Activated CD4-positive, alpha-beta memory T cell treated with anti-CD3 and anti-CD28 coated beads, Interleukin-2, amount 10 ng/mL, durations not matched to agents 7 days and 5 days (primary cell): ENCODE measurements at regions of chr3 and their contacts with region 1.

Region 1: GRCh38 chr3:88019024-88019423 is 39.8 kb downstream of the CGGBP1 start:
- DNase-seq: peak; percentile 33
- H3K4me3 Mint-ChIP-seq: no peak overlapping the region
- H3K27ac Mint-ChIP-seq: no peak overlapping the region
- H3K4me1 Mint-ChIP-seq: peaks cover 32% of the 10 kb centered on the region
- H3K27me3 Mint-ChIP-seq: peaks cover 4% of the 10 kb centered on the region

Region 2: DNA sequence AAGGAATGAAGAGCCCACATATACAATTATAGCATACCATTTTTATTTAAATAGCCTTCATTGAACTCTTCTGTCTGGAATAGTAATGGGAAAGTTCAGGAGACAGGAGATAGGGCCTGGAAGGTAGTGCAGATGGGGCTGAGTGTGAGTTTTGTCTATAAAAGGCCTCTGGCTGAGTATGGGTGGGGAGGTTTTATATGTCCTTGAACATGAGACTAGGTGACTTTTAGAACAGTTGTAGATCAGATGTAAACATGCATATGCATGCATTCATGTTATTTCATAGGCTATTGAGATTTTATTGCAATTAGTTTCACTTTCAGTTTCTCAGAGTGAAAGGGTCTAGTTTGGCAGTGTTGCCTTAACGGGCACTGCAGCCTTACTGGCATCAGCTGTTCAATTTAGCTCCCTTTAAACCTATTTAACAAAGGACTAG is 12.6 kb after region 1 on chr3:
- CTCF ChIA-PET with region 1: interaction called, 12 read pairs
- POLR2A ChIA-PET with region 1: interaction called, 15 read pairs
- DNase-seq: peak; percentile 25
- H3K4me3 Mint-ChIP-seq: peak overlapping the region; percentile 89
- H3K27ac Mint-ChIP-seq: peak overlapping the region; percentile 87
- H3K4me1 Mint-ChIP-seq: peaks cover 32% of the 10 kb centered on the region
- H3K27me3 Mint-ChIP-seq: no peaks in the 10 kb centered on the region

Region 3: GRCh38 chr3:88058591-88059368 is 39.8 kb after region 1 on chr3 and contains the starts of genes CGGBP1 and ZNF654:
- CTCF ChIA-PET with region 1: no interaction called
- POLR2A ChIA-PET with region 1: interaction called, 17 read pairs
- DNase-seq: peak; percentile 99
- H3K4me3 Mint-ChIP-seq: peak within 1 kb of the TSS; percentile 99
- H3K27ac Mint-ChIP-seq: peak within 1 kb of the TSS; percentile 95
- H3K4me1 Mint-ChIP-seq: peaks cover 51% of the 10 kb centered on the region
- H3K27me3 Mint-ChIP-seq: no peaks in the 10 kb centered on the region
- total RNA-seq, gene CGGBP1: 105 to 118 TPM
- total RNA-seq, gene ZNF654: 26.5 to 27.4 TPM